ENCODE measurements at regions of chr2 and their contacts with region 1.

Region 1: DNA sequence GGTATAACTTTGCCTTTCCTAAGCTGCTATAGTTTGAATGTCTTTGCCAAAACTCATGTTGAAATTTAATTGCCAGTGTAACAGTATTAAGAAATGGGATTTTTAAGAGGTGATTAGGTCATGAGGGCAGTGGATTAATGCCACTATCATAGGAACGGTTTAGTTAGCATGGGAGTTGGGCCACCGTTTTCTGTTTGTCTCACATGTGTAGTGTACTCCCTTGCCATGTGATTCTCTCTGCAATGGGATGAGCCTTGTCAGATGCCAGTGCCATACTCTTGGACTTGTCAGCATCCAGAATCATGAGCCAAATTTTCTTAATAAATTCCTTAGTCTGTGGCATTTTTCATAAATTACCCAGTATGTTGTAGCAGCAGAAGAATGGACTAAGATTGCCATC is 388.9 kb upstream of the RGPD4 start:
- DNase-seq: no peak
- H3K4me3 ChIP-seq: no peak overlapping the region
- H3K4me3 Mint-ChIP-seq: no peak overlapping the region
- H3K27ac Mint-ChIP-seq: no peak overlapping the region
- H3K4me1 ChIP-seq: no peaks in the 10 kb centered on the region
- H3K4me1 Mint-ChIP-seq: no peaks in the 10 kb centered on the region
- H3K27me3 ChIP-seq: no peaks in the 10 kb centered on the region
- H3K27me3 Mint-ChIP-seq: peaks cover 4% of the 10 kb centered on the region
- CTCF ChIP-seq: no peak

Region 2: GRCh38 chr2:107502539-107502938 is 64.7 kb after region 1 on chr2:
- CTCF ChIA-PET with region 1: no interaction called
- POLR2A ChIA-PET with region 1: no interaction called
- intact Hi-C with region 1: loop called (anchors 2 kb)
- DNase-seq: no peak
- H3K4me3 ChIP-seq: no peak overlapping the region
- H3K4me3 Mint-ChIP-seq: no peak overlapping the region
- H3K27ac Mint-ChIP-seq: no peak overlapping the region
- H3K4me1 ChIP-seq: no peaks in the 10 kb centered on the region
- H3K4me1 Mint-ChIP-seq: no peaks in the 10 kb centered on the region
- H3K27me3 ChIP-seq: no peaks in the 10 kb centered on the region
- H3K27me3 Mint-ChIP-seq: peaks cover 8% of the 10 kb centered on the region
- CTCF ChIP-seq: no peak